ENCODE measurements at regions of chr17 and their contacts with region 1.

Region 1: GRCh38 chr17:48747445-48748363 is 19.2 kb upstream of the HOXB13 start:
- DNase-seq: no peak

Region 2: DNA sequence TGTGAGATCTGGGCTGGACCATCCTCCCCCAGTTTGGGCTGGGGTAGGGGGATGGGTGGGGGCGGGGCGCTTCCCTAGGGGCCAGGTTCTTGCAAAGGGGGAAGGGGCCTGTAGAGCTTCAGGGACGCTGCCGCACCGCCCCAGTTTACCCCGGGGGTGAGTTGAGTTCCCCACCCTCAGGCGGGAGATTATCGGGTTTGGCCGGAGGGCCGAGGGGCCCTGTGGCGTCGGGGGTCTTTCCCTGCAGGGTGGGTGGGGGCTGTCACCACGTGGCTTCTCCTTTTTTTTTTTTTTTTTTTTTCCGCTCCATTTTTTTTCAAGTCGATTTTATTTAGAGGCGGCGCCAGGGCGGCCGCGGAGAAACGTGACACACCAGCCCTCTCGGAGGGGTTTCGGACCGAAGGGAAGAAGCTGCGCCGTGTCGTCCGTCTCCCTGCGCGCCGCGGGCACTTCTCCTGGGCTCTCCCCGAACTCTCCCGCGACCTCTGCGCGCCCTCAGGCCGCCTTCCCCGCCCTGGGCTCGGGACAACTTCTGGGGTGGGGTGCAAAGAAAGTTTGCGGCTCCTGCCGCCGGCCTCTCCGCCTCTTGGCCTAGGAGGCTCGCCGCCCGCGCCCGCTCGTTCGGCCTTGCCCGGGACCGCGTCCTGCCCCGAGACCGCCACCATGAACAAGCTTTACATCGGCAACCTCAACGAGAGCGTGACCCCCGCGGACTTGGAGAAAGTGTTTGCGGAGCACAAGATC is 249.6 kb after region 1 on chr17 and contains the start of gene IGF2BP1:
- intact Hi-C with region 1: loop called (anchors 10 kb)
- DNase-seq: peak in 2 of 42 donors; percentile 30 to 36

Measured in head of caudate nucleus (tissue), 42 donors.